ENCODE measurements at regions of chr4 and their contacts with region 1.

Region 1: GRCh38 chr4:139184129-139184528 is 7.1 kb upstream of the ELF2 start:
- DNase-seq: no peak
- ATAC-seq: peak; percentile 81
- H3K4me3 ChIP-seq: no peak overlapping the region
- H3K27ac ChIP-seq: no peak overlapping the region
- H3K4me1 ChIP-seq: no peaks in the 10 kb centered on the region
- H3K27me3 ChIP-seq: peaks cover 0 to 3% of the 10 kb centered on the region in 2 experiments; a peak in 2 of 4 replicates
- CTCF ChIP-seq: peak; percentile 19 to 52 (median 21); a peak in 4 of 6 replicates
- EP300 ChIP-seq: no peak
- POLR2A ChIP-seq: no peak
- RAD21 ChIP-seq: peak; percentile 69

Region 2: GRCh38 chr4:139214039-139214534 is 30.0 kb after region 1 on chr4:
- CTCF ChIA-PET with region 1: interaction called, 3 read pairs
- POLR2A ChIA-PET with region 1: interaction called, 4 read pairs
- RAD21 ChIA-PET with region 1: interaction called, 3 read pairs
- SMC1A ChIA-PET with region 1: interaction called, 14 read pairs
- in situ Hi-C with region 1: no loop called
- intact Hi-C with region 1: no loop called
- DNase-seq: peak; percentile 65
- ATAC-seq: peak; percentile 98
- H3K4me3 ChIP-seq: no peak overlapping the region
- H3K27ac ChIP-seq: no peak overlapping the region
- H3K4me1 ChIP-seq: peaks cover 10% of the 10 kb centered on the region
- H3K27me3 ChIP-seq: no peaks in the 10 kb centered on the region
- CTCF ChIP-seq: no peak
- EP300 ChIP-seq: peak; percentile 15 to 51; a peak in 2 of 4 replicates
- POLR2A ChIP-seq: no peak
- RAD21 ChIP-seq: no peak